ENCODE measurements at regions of chr22 and their contacts with region 1.

Region 1: DNA sequence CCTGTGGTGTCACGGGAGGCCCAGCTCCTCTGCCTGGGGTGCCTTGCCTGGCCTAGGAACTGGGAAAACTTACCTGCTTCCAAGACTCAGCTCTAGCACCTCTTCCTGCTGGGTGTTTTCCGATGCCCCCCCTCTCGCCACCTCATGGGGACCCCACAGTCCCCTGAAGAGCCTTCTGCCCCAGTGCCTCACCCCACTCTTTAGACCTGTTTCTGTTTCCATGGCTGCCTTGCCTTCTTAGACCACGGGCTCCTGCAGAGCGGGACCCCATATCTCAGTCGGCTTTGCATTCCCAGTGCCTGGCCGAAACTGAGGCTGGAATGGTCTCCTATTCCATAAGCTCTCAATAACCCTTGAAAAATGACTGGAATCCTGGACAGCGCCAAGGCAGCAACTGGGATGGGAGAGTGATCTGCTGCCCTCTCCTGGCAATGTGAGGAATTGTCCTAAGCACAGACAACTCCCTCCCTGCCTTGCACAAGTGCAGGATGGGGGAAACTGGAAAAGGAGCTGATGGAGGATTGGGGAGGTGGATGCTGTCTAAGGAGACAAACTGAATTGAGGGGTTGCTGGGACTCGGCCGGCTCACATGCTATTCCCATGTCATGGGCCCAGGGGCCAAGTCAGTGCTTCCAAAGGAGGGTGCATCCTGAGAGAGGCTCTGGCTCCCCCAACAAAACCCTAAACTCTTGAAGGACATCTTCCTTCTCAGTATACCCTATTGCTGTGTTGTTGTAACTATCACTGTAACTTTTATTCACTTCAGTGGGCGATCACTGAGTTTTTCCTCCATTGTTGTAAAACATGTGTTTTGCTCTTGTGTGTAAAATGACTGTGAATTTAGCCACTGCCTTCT is 26.6 kb upstream of the IL17RA start:
- DNase-seq: peak; percentile 70
- CTCF ChIP-seq: peak; percentile 84

Region 2: DNA sequence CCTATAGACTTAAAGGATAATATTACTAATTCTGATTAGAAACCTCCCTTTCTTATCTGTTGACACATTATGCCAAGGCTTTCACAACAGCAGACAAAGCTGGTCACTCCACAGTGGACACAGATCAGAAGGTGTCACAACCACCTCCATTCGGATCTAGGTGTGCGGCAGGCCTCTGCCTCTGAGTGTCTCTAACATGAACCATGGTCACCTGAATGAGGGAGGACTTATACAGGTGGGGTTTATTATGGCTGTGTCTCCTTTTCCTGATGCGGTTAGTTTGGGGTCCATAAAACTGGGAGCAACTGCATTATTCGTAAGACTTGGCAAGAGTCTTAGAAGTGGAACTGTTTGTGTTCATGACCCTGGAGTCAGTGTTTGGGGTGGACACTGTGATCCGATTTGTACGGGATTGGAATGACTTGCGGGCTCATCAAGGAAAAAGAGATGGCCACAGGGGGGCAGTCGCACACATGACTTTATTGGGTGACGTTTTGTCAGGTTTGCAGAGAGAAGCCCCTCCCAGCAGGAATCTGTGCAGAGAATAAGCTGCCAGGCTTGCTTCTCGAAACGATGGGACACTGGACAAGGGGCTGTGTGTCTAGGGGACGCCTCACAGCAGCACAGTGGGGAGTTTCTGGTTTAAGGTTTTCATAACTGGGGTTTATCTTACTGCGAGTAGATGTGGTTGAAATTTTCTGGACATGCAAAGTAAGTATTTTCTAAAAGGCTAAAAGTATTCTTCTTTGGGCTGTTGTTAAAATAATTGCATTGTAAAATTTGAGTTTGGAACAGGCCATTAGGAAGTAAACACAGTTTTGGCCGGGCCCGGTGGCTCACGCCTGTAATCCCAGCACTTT is 140.8 kb before region 1 on chr22:
- in situ Hi-C with region 1: loop called (anchors 10 kb)
- DNase-seq: peak; percentile 59
- CTCF ChIP-seq: peak; percentile 61

Region 3: GRCh38 chr22:17013396-17014100 is 44.6 kb before region 1 on chr22:
- in situ Hi-C with region 1: no loop called
- DNase-seq: no peak
- CTCF ChIP-seq: no peak